AG04449 (cell line): ENCODE measurements at regions of chr6 and their contacts with region 1.

Region 1: DNA sequence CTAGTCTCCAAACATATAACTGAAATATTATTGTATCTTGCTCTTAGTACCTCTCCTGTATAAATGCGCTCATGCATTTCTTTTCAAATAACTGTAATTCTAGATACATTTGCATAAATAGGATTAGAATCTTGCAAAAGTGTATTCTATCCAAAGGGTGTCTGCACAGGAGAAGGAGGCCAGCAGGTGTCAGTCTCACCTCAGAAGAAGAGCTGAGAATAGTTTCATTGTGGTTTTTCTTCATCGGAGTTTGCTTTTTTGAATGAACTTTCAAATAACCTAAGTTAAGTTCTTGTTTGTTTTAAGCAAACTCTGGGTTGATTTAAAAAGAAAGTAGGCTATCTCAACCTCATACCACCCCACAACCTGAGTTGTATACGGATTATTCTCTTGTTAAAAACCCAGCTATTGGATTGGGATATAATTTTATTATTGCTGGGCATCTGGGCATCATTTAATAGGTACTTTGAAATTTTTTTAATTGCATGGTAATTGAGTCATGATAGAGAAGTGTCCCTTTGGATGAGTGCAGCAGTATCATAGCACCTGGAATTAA is 125.0 kb upstream of the MLIP start:
- DNase-seq: no peak
- H3K4me3 ChIP-seq: no peak overlapping the region
- CTCF ChIP-seq: peak; percentile 68

Region 2: GRCh38 chr6:53998303-53998702 is 12.1 kb after region 1 on chr6:
- CTCF ChIA-PET with region 1: interaction called, 22 read pairs
- POLR2A ChIA-PET with region 1: no interaction called
- DNase-seq: no peak
- H3K4me3 ChIP-seq: no peak overlapping the region
- CTCF ChIP-seq: no peak

Region 3: GRCh38 chr6:54244430-54244829 is 258.2 kb after region 1 on chr6:
- CTCF ChIA-PET with region 1: interaction called, 51 read pairs
- POLR2A ChIA-PET with region 1: no interaction called
- DNase-seq: no peak
- H3K4me3 ChIP-seq: no peak overlapping the region
- CTCF ChIP-seq: peak; percentile 32

Region 4: DNA sequence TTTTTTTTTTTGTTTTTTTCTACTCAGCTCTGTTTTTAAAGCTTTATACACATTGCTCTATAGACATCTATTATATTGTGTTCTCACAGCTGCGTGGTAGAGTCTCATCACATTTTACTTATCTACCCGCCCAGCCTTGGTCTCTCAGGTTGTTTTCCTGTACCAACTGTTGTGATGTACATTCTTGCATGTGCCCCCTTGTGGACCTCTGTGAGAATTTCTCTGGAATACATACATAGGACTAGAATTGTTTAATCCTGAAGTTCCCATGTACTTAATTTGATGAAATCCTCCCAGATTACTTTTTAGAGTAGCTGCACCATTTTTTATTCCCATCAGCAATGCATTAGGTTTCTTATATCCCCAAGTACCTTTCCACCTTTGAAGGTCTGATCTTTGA is 281.6 kb after region 1 on chr6:
- CTCF ChIA-PET with region 1: interaction called, 34 read pairs
- POLR2A ChIA-PET with region 1: no interaction called
- DNase-seq: no peak
- H3K4me3 ChIP-seq: no peak overlapping the region
- CTCF ChIP-seq: peak; percentile 52

Region 5: GRCh38 chr6:54273214-54273820 is 287.1 kb after region 1 on chr6:
- CTCF ChIA-PET with region 1: interaction called, 34 read pairs
- POLR2A ChIA-PET with region 1: no interaction called
- DNase-seq: no peak
- H3K4me3 ChIP-seq: no peak overlapping the region
- CTCF ChIP-seq: no peak

Region 6: GRCh38 chr6:54286141-54286540 is 299.9 kb after region 1 on chr6:
- CTCF ChIA-PET with region 1: interaction called, 18 read pairs
- POLR2A ChIA-PET with region 1: no interaction called
- DNase-seq: no peak
- H3K4me3 ChIP-seq: no peak overlapping the region
- CTCF ChIP-seq: no peak

Region 7: DNA sequence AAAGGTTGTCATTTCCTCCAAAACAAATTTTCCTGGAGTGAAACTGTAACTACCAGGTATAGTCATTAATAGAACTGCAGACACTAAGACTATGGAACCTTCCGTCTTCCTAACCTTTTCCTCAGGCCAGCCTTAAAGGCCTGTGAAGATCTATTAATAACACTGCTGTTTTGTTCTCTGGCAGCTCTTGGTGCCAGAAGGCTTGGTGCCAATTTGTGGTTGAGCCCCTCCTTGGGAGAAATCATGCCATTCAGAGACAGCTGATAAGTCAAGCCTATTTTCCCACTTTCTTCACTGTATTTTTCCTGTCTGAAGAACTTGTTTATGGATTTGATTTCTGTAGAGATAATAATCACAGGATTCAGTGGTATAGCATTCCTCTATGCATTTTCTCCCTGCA is 1252.9 kb after region 1 on chr6:
- CTCF ChIA-PET with region 1: interaction called, 14 read pairs
- POLR2A ChIA-PET with region 1: no interaction called
- DNase-seq: no peak
- H3K4me3 ChIP-seq: no peak overlapping the region
- CTCF ChIP-seq: no peak